IMR-90 (cell line): ENCODE measurements at regions of chr1 and their contacts with region 1.

Region 1: DNA sequence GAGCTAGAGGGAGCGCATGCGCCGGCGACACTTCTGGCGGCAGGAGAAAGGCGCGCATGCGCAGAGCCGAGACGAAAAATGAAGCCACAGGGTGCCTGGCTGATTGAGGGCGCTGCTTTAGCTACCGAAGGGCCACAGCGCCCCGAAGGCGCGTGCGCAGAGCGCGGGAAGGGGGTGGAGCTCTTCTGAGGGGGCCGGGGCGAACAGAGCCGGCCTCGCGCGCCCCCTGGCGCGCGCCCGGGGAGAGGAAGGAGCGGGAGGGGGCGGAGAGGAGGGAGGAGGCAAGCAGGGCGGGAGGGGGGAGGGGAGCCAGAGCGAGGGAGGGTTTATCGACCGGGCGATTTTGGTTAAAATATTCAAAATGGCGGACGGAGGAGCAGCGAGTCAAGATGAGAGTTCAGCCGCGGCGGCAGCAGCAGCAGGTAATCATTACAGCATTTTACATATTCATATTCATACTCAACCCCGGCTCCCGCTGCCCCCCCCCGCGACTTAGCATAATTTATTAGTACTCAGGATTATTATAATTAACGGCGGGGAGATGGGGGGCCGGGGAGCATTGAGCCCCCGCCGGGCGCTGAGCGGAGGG is at the start of gene POU2F1:
- DNase-seq: peak; percentile 97
- ATAC-seq: peak; percentile 92
- H3K4me3 ChIP-seq: peak within 1 kb of the TSS; percentile 66
- H3K27ac ChIP-seq: peak within 1 kb of the TSS; percentile 72
- H3K4me1 ChIP-seq: no peaks in the 10 kb centered on the region
- H3K27me3 ChIP-seq: peaks cover 2% of the 10 kb centered on the region; the same call in 1 of the 2 replicates
- CTCF ChIP-seq: peak; percentile 89
- POLR2A ChIP-seq: 0 out of 2 replicates have a peak, but pooled peaks have one; percentile 49
- RAD21 ChIP-seq: peak; percentile 36
- total RNA-seq, gene POU2F1: 3.4 and 4.4 TPM in 2 replicates

Region 2: DNA sequence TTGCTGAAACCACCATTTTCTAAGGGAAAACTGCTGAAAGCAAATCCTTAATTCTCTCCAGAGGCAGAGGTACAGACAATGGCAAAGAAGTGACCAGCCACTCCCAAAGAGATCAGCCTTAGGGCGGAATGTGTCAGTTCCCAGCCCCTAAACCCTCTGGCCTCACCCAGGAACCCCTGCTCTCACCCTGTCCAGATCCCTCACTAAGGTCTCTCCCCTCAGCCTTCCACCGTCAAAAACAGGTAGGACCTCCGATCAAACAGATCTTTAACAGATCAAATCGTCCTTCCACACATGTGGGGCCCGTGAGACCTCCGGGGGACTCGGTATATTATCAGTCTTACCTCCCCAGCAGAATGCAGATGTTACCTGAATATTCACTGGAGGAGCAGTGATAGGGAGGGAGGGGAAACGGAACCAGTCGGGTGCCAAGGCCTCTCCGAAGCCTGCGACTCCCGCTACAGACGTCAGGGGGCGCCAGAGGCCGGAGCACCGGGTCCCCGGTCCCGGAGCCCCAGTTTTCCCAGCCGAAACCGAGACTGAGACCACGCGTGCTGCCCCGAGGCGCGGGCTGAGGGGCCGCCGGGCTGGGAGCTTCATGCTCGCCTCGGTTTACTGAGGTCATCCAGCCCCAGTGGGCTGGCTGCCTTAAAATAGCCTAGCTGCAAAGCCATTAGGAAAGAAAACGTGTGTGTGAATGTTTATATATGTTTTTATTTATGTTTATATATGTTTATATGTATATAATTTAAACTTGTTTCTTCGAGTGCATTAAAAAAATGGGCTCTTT is 154.1 kb before region 1 on chr1:
- CTCF ChIA-PET with region 1: interaction called, 3 read pairs
- POLR2A ChIA-PET with region 1: no interaction called
- dilution Hi-C with region 1: no loop called
- in situ Hi-C with region 1: no loop called
- intact Hi-C with region 1: loop called (anchors 5 kb)
- DNase-seq: peak; percentile 15
- ATAC-seq: peak; percentile 98
- H3K4me3 ChIP-seq: peak overlapping the region; percentile 23; the same call in 1 of the 2 replicates
- H3K27ac ChIP-seq: no peak overlapping the region
- H3K4me1 ChIP-seq: no peaks in the 10 kb centered on the region
- H3K27me3 ChIP-seq: peaks cover 15% of the 10 kb centered on the region
- CTCF ChIP-seq: peak; percentile 91
- POLR2A ChIP-seq: no peak
- RAD21 ChIP-seq: peak; percentile 92

Region 3: DNA sequence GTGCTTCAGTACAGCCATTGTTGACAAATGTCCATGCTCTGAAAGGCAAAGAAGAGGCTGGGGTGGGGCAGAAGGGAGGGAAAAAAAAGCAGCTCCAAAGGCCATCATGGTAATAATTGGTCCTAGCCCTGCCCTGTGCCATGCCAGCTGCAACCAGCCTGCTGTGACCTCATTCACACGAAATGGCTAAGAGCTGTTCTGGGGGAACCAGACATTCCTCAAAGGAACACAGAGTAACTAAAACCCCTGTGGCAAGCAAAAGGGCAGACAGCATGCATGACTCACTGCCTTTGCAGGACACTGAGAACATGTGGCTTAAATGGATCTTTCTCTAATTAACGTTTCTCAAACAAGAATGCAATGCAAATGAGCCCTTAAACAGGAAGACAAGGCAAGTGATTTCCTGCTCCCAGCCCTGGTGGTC is 84.4 kb before region 1 on chr1:
- CTCF ChIA-PET with region 1: no interaction called
- POLR2A ChIA-PET with region 1: no interaction called
- dilution Hi-C with region 1: no loop called
- in situ Hi-C with region 1: no loop called
- intact Hi-C with region 1: no loop called
- DNase-seq: peak; percentile 12
- ATAC-seq: peak; percentile 59
- H3K4me3 ChIP-seq: no peak overlapping the region
- H3K27ac ChIP-seq: no peak overlapping the region
- H3K4me1 ChIP-seq: no peaks in the 10 kb centered on the region
- H3K27me3 ChIP-seq: peaks cover 1% of the 10 kb centered on the region; the same call in 1 of the 2 replicates
- CTCF ChIP-seq: no peak
- POLR2A ChIP-seq: no peak
- RAD21 ChIP-seq: no peak

Region 4: DNA sequence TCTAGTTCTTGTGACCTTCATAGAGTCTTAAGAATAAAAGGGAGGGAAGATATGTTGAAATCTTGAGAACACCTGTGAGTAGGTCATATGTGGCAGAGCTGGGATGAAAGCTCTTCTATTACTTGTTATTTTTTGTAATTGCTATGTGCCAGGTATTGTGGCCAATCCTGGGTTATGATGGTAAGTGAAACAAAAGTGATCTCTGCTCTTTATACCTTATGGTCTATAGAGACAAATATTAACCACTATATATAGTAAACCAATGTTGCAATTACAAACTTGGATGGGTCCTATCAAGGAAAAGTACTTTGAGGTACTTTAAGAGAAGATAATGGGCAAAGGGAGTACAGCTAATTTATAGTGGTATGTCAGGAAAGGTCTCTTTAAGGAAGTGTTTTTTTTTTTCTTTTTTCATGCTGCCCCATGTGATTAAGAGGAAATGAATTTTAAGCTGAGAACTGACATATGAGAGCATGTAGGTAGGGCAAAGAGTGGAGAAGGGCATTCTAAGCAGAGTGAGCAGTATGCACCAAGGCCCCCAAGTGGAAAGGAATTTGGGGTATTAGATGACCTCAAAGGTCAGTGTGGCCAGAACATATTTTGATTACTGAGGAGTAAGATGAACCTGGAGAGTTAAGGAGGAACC is 43.3 kb after region 1 on chr1:
- CTCF ChIA-PET with region 1: interaction called, 6 read pairs
- POLR2A ChIA-PET with region 1: no interaction called
- dilution Hi-C with region 1: no loop called
- in situ Hi-C with region 1: no loop called
- intact Hi-C with region 1: loop called (anchors 5 kb)
- DNase-seq: no peak
- ATAC-seq: no peak
- H3K4me3 ChIP-seq: no peak overlapping the region
- H3K27ac ChIP-seq: no peak overlapping the region
- H3K4me1 ChIP-seq: peaks cover under 1% of the 10 kb centered on the region; the same call in 1 of the 2 replicates
- H3K27me3 ChIP-seq: no peaks in the 10 kb centered on the region
- CTCF ChIP-seq: no peak
- POLR2A ChIP-seq: no peak
- RAD21 ChIP-seq: no peak

Region 5: GRCh38 chr1:167297222-167298214 is 76.9 kb after region 1 on chr1:
- CTCF ChIA-PET with region 1: interaction called, 3 read pairs
- POLR2A ChIA-PET with region 1: interaction called, 13 read pairs
- dilution Hi-C with region 1: no loop called
- in situ Hi-C with region 1: no loop called
- intact Hi-C with region 1: no loop called
- DNase-seq: peak; percentile 3
- ATAC-seq: peak; percentile 59
- H3K4me3 ChIP-seq: no peak overlapping the region
- H3K27ac ChIP-seq: no peak overlapping the region
- H3K4me1 ChIP-seq: no peaks in the 10 kb centered on the region
- H3K27me3 ChIP-seq: no peaks in the 10 kb centered on the region
- CTCF ChIP-seq: no peak
- POLR2A ChIP-seq: no peak
- RAD21 ChIP-seq: no peak

Region 6: GRCh38 chr1:167428395-167428794 is 207.8 kb after region 1 on chr1:
- CTCF ChIA-PET with region 1: no interaction called
- POLR2A ChIA-PET with region 1: interaction called, 15 read pairs
- dilution Hi-C with region 1: no loop called
- in situ Hi-C with region 1: no loop called
- intact Hi-C with region 1: no loop called
- DNase-seq: no peak
- ATAC-seq: no peak
- H3K4me3 ChIP-seq: no peak overlapping the region
- H3K27ac ChIP-seq: no peak overlapping the region
- H3K4me1 ChIP-seq: no peaks in the 10 kb centered on the region; the same call in 1 of the 2 replicates
- H3K27me3 ChIP-seq: no peaks in the 10 kb centered on the region; the same call in 1 of the 2 replicates
- CTCF ChIP-seq: no peak
- POLR2A ChIP-seq: no peak
- RAD21 ChIP-seq: no peak

Region 7: DNA sequence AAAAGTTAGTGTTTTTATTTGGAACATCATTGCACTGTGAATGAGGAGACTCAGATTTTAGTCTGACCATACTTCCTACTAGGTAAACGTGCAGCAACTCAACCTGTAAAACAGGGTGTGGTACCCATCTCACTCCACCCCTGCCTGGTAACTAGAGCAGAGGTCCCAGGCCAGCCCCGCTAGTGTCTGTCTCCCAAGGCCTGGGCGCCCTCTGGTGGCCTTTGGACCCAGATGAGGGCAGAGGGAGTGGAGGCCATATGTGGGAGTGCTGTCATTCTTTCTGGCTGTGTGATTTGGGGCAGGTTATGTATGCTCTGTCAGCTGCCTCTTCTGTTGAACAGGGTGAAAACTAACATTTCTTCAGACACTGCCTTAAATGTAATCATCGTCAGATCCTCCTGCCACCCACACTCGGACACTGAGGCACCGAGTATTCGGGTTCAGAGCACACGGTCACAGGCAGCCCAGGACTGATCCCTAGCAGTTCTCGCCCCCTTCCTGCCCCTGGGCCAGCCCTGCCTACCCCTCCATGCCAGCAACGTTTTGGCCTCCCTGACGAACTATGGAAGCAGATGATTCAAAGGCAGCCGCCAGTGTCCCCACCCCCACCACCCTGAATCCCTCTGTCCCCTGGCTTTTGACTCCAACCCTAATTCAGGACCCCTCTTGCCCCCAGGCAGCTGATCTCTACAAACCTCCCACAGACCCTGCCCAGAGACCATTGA is 221.7 kb after region 1 on chr1:
- CTCF ChIA-PET with region 1: no interaction called
- POLR2A ChIA-PET with region 1: no interaction called
- dilution Hi-C with region 1: no loop called
- in situ Hi-C with region 1: no loop called
- intact Hi-C with region 1: loop called (anchors 5 kb)
- DNase-seq: peak; percentile 55
- ATAC-seq: peak; percentile 94
- H3K4me3 ChIP-seq: no peak overlapping the region
- H3K27ac ChIP-seq: no peak overlapping the region
- H3K4me1 ChIP-seq: no peaks in the 10 kb centered on the region
- H3K27me3 ChIP-seq: peaks cover 36% of the 10 kb centered on the region
- CTCF ChIP-seq: peak; percentile 86
- POLR2A ChIP-seq: no peak
- RAD21 ChIP-seq: peak; percentile 86

Region 8: GRCh38 chr1:167803358-167804207 is 583.0 kb after region 1 on chr1:
- CTCF ChIA-PET with region 1: no interaction called
- POLR2A ChIA-PET with region 1: no interaction called
- dilution Hi-C with region 1: no loop called
- in situ Hi-C with region 1: no loop called
- intact Hi-C with region 1: loop called (anchors 10 kb)
- DNase-seq: peak; percentile 95
- ATAC-seq: peak; percentile 89
- H3K4me3 ChIP-seq: no peak overlapping the region
- H3K27ac ChIP-seq: no peak overlapping the region
- H3K4me1 ChIP-seq: peaks cover 9% of the 10 kb centered on the region
- H3K27me3 ChIP-seq: no peaks in the 10 kb centered on the region
- CTCF ChIP-seq: peak; percentile 98
- POLR2A ChIP-seq: no peak
- RAD21 ChIP-seq: peak; percentile 89